ENCODE measurements at regions of chr6 and their contacts with region 1.

Region 1: GRCh38 chr6:73491377-73491776 is 29.5 kb downstream of the EEF1A1 start:
- DNase-seq: no peak
- ATAC-seq: no peak
- H3K4me3 ChIP-seq: no peak overlapping the region
- H3K4me3 Mint-ChIP-seq: no peak overlapping the region
- H3K27ac ChIP-seq: no peak overlapping the region
- H3K27ac Mint-ChIP-seq: peak overlapping the region in 1 of 2 donors; percentile 22
- H3K4me1 ChIP-seq: no peaks in the 10 kb centered on the region
- H3K4me1 Mint-ChIP-seq: peaks cover 0 to 8% (median 1%) of the 10 kb centered on the region in 3 donors
- H3K27me3 ChIP-seq: no peaks in the 10 kb centered on the region
- H3K27me3 Mint-ChIP-seq: no peaks in the 10 kb centered on the region

Region 2: GRCh38 chr6:73409395-73409794 is 82.0 kb before region 1 on chr6:
- CTCF ChIA-PET with region 1: no interaction called
- POLR2A ChIA-PET with region 1: interaction called in 1 of 2 experiments, 10 read pairs
- DNase-seq: no peak
- ATAC-seq: no peak
- H3K4me3 ChIP-seq: no peak overlapping the region
- H3K4me3 Mint-ChIP-seq: no peak overlapping the region
- H3K27ac ChIP-seq: no peak overlapping the region
- H3K27ac Mint-ChIP-seq: no peak overlapping the region
- H3K4me1 ChIP-seq: no peaks in the 10 kb centered on the region
- H3K4me1 Mint-ChIP-seq: no peaks in the 10 kb centered on the region
- H3K27me3 ChIP-seq: no peaks in the 10 kb centered on the region
- H3K27me3 Mint-ChIP-seq: no peaks in the 10 kb centered on the region

Region 3: GRCh38 chr6:73610444-73611275 is 119.3 kb after region 1 on chr6:
- CTCF ChIA-PET with region 1: interaction called, 4 to 10 read pairs
- POLR2A ChIA-PET with region 1: interaction called in 1 of 2 experiments, 4 read pairs
- DNase-seq: peak in 2 of 35 experiments; percentile 11 to 73
- ATAC-seq: peak; percentile 36 to 69 (median 48)
- H3K4me3 ChIP-seq: no peak overlapping the region
- H3K4me3 Mint-ChIP-seq: no peak overlapping the region
- H3K27ac ChIP-seq: no peak overlapping the region
- H3K27ac Mint-ChIP-seq: peak overlapping the region in 1 of 2 donors; percentile 53
- H3K4me1 ChIP-seq: no peaks in the 10 kb centered on the region
- H3K4me1 Mint-ChIP-seq: peaks cover 4 to 6% (median 4%) of the 10 kb centered on the region in 3 donors
- H3K27me3 ChIP-seq: no peaks in the 10 kb centered on the region
- H3K27me3 Mint-ChIP-seq: no peaks in the 10 kb centered on the region

Measured in T-cell (primary cell).